Activated CD4-positive, alpha-beta T cell treated with anti-CD3 and anti-CD28 coated beads for 36 hours (primary cell): ENCODE measurements at regions of chr1 and their contacts with region 1.

Region 1: GRCh38 chr1:6962996-6963911 is 178.0 kb downstream of the CAMTA1 start:
- DNase-seq: peak; percentile 93
- ATAC-seq: peak; percentile 63
- H3K4me3 Mint-ChIP-seq: peak overlapping the region; percentile 69
- H3K27ac Mint-ChIP-seq: peak overlapping the region; percentile 85
- H3K4me1 Mint-ChIP-seq: peaks cover 22% of the 10 kb centered on the region
- H3K27me3 Mint-ChIP-seq: peaks cover 8% of the 10 kb centered on the region

Region 2: DNA sequence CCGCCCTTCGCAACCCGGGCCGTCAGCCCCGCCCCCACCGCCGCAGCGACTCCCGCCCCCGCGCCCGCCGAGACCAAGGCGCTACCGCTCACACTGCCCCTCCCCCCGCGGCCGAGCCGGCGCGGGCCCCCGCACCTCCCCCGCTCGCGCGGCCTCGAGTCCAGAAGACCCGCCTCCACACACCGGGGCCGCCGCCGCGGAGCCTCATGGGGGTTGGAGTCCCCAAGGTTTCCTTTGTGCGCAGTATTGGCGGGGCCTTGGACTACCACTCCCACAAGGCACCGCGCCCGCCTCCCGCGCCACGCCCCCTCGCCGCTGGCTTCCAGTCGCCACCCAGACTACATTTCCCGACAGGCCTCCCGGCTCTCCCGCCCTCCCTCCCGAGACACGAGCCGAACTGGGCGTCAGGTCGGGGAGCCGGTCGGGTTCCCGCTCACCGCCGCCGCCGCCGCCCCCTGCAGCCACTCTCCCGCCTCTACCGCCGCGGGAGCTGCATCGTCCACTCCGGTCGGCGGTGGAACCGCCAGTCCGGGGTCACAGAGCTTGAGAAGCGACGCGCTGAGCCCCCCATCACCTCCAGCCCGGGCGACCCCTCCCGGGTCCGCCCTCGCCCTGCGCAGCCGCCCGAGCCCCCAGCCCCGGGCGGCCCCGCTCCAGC is 349.8 kb before region 1 on chr1 and contains the start of gene PHF13:
- CTCF ChIA-PET with region 1: no interaction called
- POLR2A ChIA-PET with region 1: no interaction called
- intact Hi-C with region 1: loop called in 1 of 2 experiments (anchors 1 kb)
- DNase-seq: peak; percentile 100
- ATAC-seq: peak; percentile 98
- H3K4me3 Mint-ChIP-seq: peak within 1 kb of the TSS; percentile 80
- H3K27ac Mint-ChIP-seq: peak within 1 kb of the TSS; percentile 87
- H3K4me1 Mint-ChIP-seq: peaks cover 20% of the 10 kb centered on the region
- H3K27me3 Mint-ChIP-seq: no peaks in the 10 kb centered on the region
- total RNA-seq, gene PHF13: 13.2 to 13.6 TPM

Region 3: GRCh38 chr1:6624710-6625583 is 338.3 kb before region 1 on chr1 and contains the start of gene THAP3:
- CTCF ChIA-PET with region 1: no interaction called
- POLR2A ChIA-PET with region 1: no interaction called
- intact Hi-C with region 1: loop called in 1 of 2 experiments (anchors 1 kb)
- DNase-seq: peak; percentile 96
- ATAC-seq: peak; percentile 98
- H3K4me3 Mint-ChIP-seq: peak within 1 kb of the TSS; percentile 85
- H3K27ac Mint-ChIP-seq: peak within 1 kb of the TSS; percentile 78
- H3K4me1 Mint-ChIP-seq: peaks cover 28% of the 10 kb centered on the region
- H3K27me3 Mint-ChIP-seq: no peaks in the 10 kb centered on the region
- total RNA-seq, gene THAP3: 19.4 to 22.1 TPM

Region 4: DNA sequence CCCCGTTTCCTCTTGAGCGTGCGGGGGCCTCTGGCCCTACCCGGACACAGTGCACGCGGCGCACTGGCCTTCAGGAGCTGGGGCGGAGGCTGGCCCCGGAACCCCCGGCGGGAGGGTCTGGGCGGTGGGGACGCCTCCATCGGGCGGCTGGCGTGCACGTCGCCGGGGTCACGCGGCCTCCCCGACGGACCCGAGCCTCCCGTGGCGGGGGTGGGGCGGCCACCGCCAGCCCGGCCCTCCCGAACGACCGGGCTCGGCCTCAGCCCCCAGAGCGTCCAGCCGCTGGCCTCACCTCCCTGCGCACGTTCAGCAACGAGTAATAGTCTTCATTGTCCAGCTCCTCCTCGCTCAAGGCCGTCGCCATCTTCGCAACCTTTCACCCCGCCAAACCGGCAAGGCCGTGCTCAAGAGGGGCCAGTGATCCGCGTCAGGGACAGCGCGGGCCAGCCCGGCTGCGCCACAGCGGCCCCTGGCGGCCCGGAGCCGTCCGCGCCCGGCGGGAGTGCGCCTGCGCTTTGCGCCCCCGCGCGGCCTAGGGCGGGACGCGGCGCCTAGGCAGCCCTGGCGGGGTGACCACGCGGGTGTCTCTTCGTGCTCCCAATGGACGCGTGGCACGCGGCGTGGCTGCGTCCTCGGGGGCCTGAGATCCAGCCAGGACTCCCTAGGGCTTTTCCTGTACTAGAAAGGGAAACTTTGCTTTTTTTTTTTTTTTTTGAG is 261.7 kb before region 1 on chr1 and contains the start of gene DNAJC11:
- CTCF ChIA-PET with region 1: no interaction called
- POLR2A ChIA-PET with region 1: no interaction called
- intact Hi-C with region 1: loop called in 1 of 2 experiments (anchors 1 kb)
- DNase-seq: peak; percentile 93
- ATAC-seq: peak; percentile 98
- H3K4me3 Mint-ChIP-seq: peak within 1 kb of the TSS; percentile 90
- H3K27ac Mint-ChIP-seq: peak within 1 kb of the TSS; percentile 92
- H3K4me1 Mint-ChIP-seq: peaks cover 28% of the 10 kb centered on the region
- H3K27me3 Mint-ChIP-seq: no peaks in the 10 kb centered on the region
- total RNA-seq, gene DNAJC11: 53.2 to 62.0 TPM

Region 5: GRCh38 chr1:6743189-6744101 is 219.8 kb before region 1 on chr1:
- CTCF ChIA-PET with region 1: no interaction called
- POLR2A ChIA-PET with region 1: no interaction called
- intact Hi-C with region 1: loop called in 1 of 2 experiments (anchors 5 kb)
- DNase-seq: peak; percentile 50
- ATAC-seq: peak; percentile 42
- H3K4me3 Mint-ChIP-seq: no peak overlapping the region
- H3K27ac Mint-ChIP-seq: no peak overlapping the region
- H3K4me1 Mint-ChIP-seq: peaks cover 16% of the 10 kb centered on the region
- H3K27me3 Mint-ChIP-seq: peaks cover 18% of the 10 kb centered on the region

Region 6: GRCh38 chr1:7070389-7071029 is 107.3 kb after region 1 on chr1:
- CTCF ChIA-PET with region 1: interaction called, 4 read pairs
- POLR2A ChIA-PET with region 1: no interaction called
- intact Hi-C with region 1: loop called in 1 of 2 experiments (anchors 5 kb)
- DNase-seq: peak; percentile 76
- ATAC-seq: peak; percentile 81
- H3K4me3 Mint-ChIP-seq: no peak overlapping the region
- H3K27ac Mint-ChIP-seq: no peak overlapping the region
- H3K4me1 Mint-ChIP-seq: peaks cover 2% of the 10 kb centered on the region
- H3K27me3 Mint-ChIP-seq: peaks cover 30% of the 10 kb centered on the region

Region 7: GRCh38 chr1:7783826-7784491 is 820.7 kb after region 1 on chr1 and contains the start of gene PER3:
- CTCF ChIA-PET with region 1: no interaction called
- POLR2A ChIA-PET with region 1: no interaction called
- intact Hi-C with region 1: loop called in 1 of 2 experiments (anchors 1 kb)
- DNase-seq: peak; percentile 92
- ATAC-seq: peak; percentile 95
- H3K4me3 Mint-ChIP-seq: peak within 1 kb of the TSS; percentile 67
- H3K27ac Mint-ChIP-seq: no peak within 1 kb of the TSS
- H3K4me1 Mint-ChIP-seq: peaks cover 22% of the 10 kb centered on the region
- H3K27me3 Mint-ChIP-seq: no peaks in the 10 kb centered on the region
- total RNA-seq, gene PER3: 2.3 to 2.5 TPM